A673 (cell line): ENCODE measurements at regions of chr20 and their contacts with region 1.

Region 1: DNA sequence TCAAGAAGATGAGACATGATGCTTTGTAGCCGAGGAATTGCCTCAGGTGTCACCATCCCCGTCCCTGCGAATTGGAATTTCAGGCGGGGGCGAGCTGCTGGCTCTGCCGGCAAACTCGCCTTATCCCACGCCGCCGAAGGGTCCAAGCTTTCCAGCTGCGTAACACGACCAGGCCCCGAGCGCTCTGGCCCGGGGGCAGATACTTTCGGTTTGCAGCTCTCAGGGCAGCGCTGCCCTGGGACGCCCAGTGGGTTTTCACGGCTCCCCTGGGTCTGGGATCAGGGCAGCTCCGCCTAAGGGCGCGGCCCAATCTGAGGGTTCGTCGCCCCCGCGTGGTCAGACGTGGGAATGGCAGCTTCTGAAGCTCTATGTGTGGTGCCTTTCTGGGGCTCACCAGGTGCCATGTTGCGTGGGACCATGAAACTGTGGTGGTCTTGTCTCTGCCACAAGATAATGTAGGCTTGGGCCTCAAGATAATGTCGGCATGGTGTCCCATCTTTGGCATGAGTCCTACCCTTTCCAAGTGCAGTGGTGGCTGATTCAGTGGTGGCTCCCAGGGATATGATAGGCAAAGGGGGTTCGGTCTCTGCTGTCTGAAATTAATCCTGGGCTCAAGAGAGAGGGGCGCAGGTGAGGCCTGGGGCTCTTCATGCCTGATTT is 20.9 kb downstream of the PIGT start:
- DNase-seq: peak; percentile 90
- H3K4me3 ChIP-seq: peak overlapping the region; percentile 55
- H3K27ac ChIP-seq: no peak overlapping the region
- H3K4me1 ChIP-seq: no peaks in the 10 kb centered on the region
- H3K27me3 ChIP-seq: no peaks in the 10 kb centered on the region
- CTCF ChIP-seq: peak; percentile 97

Region 2: DNA sequence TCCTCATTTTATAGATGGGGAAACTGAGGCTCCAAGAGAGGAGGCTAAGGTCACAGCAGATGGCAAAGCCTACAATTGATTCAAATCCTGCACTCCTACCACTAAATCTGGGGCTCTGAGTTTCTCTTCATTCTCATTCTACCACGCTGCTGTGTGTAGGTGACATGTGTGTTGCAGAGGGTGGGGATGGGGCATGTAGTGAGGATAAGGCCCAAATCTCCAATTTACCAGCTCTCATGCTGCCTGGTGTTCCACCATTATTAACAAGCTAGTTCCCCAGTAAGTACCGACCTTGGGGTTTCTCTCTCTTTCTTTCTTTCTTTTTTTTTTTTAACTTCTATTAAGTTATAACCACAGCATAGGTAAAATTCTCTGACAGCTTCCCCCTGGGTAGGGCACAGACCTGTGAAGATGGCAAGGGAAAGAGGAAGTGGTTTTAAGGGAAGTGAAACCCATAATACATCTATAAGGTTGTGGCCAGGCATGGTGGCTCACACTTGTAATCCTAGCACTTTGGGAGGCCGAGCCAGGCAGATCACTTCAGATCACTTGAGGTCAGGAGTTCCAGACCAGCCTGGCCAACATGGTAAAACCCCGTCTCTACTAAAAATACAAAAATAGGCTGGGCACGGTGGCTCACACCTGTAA is 115.8 kb before region 1 on chr20:
- CTCF ChIA-PET with region 1: interaction called, 17 read pairs
- POLR2A ChIA-PET with region 1: no interaction called
- intact Hi-C with region 1: loop called (anchors 1 kb)
- DNase-seq: no peak
- H3K4me3 ChIP-seq: no peak overlapping the region
- H3K27ac ChIP-seq: no peak overlapping the region
- H3K4me1 ChIP-seq: peaks cover 16% of the 10 kb centered on the region
- H3K27me3 ChIP-seq: peaks cover 4% of the 10 kb centered on the region
- CTCF ChIP-seq: no peak

Region 3: GRCh38 chr20:45362804-45363610 is 73.9 kb before region 1 on chr20 and contains the start of gene SYS1:
- CTCF ChIA-PET with region 1: interaction called, 35 read pairs
- POLR2A ChIA-PET with region 1: interaction called, 3 read pairs
- intact Hi-C with region 1: loop called (anchors 2 kb)
- DNase-seq: peak; percentile 99
- H3K4me3 ChIP-seq: peak within 1 kb of the TSS; percentile 65
- H3K27ac ChIP-seq: peak within 1 kb of the TSS; percentile 93
- H3K4me1 ChIP-seq: peaks cover 15% of the 10 kb centered on the region
- H3K27me3 ChIP-seq: no peaks in the 10 kb centered on the region
- CTCF ChIP-seq: peak; percentile 92
- total RNA-seq, gene SYS1: 20.0 and 22.8 TPM in 2 replicates

Region 4: GRCh38 chr20:45373353-45374100 is 63.3 kb before region 1 on chr20:
- CTCF ChIA-PET with region 1: interaction called, 63 read pairs
- POLR2A ChIA-PET with region 1: no interaction called
- intact Hi-C with region 1: loop called (anchors 1 kb)
- DNase-seq: peak; percentile 94
- H3K4me3 ChIP-seq: peak overlapping the region; percentile 52
- H3K27ac ChIP-seq: no peak overlapping the region
- H3K4me1 ChIP-seq: no peaks in the 10 kb centered on the region
- H3K27me3 ChIP-seq: no peaks in the 10 kb centered on the region
- CTCF ChIP-seq: peak; percentile 98